ENCODE measurements at regions of chr15 and their contacts with region 1.

Region 1: GRCh38 chr15:78709263-78709882 is 68.4 kb upstream of the CHRNB4 start:
- DNase-seq: peak; percentile 33
- H3K4me3 ChIP-seq: peak overlapping the region in 2 of 3 experiments; percentile 2 to 12
- H3K27ac ChIP-seq: no peak overlapping the region
- H3K4me1 ChIP-seq: no peaks in the 10 kb centered on the region
- H3K27me3 ChIP-seq: peaks cover 2% of the 10 kb centered on the region
- CTCF ChIP-seq: peak; percentile 50 to 92

Region 2: GRCh38 chr15:78422571-78423340 is 286.6 kb before region 1 on chr15:
- CTCF ChIA-PET with region 1: no interaction called
- dilution Hi-C with region 1: no loop called
- in situ Hi-C with region 1: no loop called
- intact Hi-C with region 1: loop called (anchors 5 kb)
- DNase-seq: peak; percentile 29
- H3K4me3 ChIP-seq: no peak overlapping the region
- H3K27ac ChIP-seq: no peak overlapping the region
- H3K4me1 ChIP-seq: no peaks in the 10 kb centered on the region
- H3K27me3 ChIP-seq: no peaks in the 10 kb centered on the region
- CTCF ChIP-seq: peak; percentile 92 to 95

Region 3: GRCh38 chr15:78492872-78493271 is 216.5 kb before region 1 on chr15:
- CTCF ChIA-PET with region 1: no interaction called
- dilution Hi-C with region 1: no loop called
- in situ Hi-C with region 1: no loop called
- intact Hi-C with region 1: loop called (anchors 5 kb)
- DNase-seq: no peak
- H3K4me3 ChIP-seq: no peak overlapping the region
- H3K27ac ChIP-seq: no peak overlapping the region
- H3K4me1 ChIP-seq: no peaks in the 10 kb centered on the region
- H3K27me3 ChIP-seq: no peaks in the 10 kb centered on the region
- CTCF ChIP-seq: no peak

Region 4: DNA sequence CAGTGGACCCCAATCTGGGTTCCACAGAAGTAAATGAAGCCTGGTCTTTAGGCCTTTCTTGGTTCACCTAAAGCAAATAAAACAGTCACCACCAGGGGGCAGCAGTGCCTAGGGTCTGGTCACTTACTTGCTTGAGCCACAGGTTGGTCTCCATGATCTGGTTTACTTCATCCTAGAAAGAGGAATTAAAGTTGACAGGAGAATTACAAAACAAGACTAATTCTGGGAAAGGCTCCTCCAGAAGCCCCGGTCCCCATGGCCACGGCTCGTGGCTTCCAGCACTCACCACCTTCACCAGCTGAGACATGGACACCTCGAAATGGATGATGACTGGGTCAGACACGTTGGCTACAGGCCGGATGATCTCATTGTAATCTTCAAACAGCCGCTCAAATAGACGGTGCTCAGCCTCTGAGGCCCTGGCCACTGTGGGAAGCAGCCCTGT is 90.9 kb before region 1 on chr15:
- CTCF ChIA-PET with region 1: interaction called, 3 read pairs
- dilution Hi-C with region 1: no loop called
- in situ Hi-C with region 1: loop called (anchors 5 kb)
- intact Hi-C with region 1: loop called (anchors 1 kb)
- DNase-seq: peak; percentile 57
- H3K4me3 ChIP-seq: no peak overlapping the region
- H3K27ac ChIP-seq: no peak overlapping the region
- H3K4me1 ChIP-seq: peaks cover 23% of the 10 kb centered on the region
- H3K27me3 ChIP-seq: peaks cover 21% of the 10 kb centered on the region
- CTCF ChIP-seq: peak; percentile 66 to 76

Region 5: GRCh38 chr15:78638658-78639314 is 70.6 kb before region 1 on chr15:
- CTCF ChIA-PET with region 1: no interaction called
- dilution Hi-C with region 1: loop called (anchors 5 kb)
- in situ Hi-C with region 1: no loop called
- intact Hi-C with region 1: loop called (anchors 1 kb)
- DNase-seq: no peak
- H3K4me3 ChIP-seq: no peak overlapping the region
- H3K27ac ChIP-seq: no peak overlapping the region
- H3K4me1 ChIP-seq: peaks cover 10% of the 10 kb centered on the region
- H3K27me3 ChIP-seq: no peaks in the 10 kb centered on the region
- CTCF ChIP-seq: peak; percentile 45 to 73